ENCODE measurements at regions of chr16 and their contacts with region 1.

Region 1: GRCh38 chr16:66483689-66484481 is 56.8 kb downstream of the BEAN1 start:
- DNase-seq: peak; percentile 42 to 56
- ATAC-seq: peak; percentile 34 to 61
- H3K4me3 ChIP-seq: no peak overlapping the region
- H3K27ac ChIP-seq: no peak overlapping the region
- H3K4me1 ChIP-seq: peaks cover 0 to 2% of the 10 kb centered on the region in 2 donors
- H3K27me3 ChIP-seq: no peaks in the 10 kb centered on the region
- CTCF ChIP-seq: peak; percentile 78 to 95 (median 83)
- POLR2A ChIP-seq: no peak

Region 2: DNA sequence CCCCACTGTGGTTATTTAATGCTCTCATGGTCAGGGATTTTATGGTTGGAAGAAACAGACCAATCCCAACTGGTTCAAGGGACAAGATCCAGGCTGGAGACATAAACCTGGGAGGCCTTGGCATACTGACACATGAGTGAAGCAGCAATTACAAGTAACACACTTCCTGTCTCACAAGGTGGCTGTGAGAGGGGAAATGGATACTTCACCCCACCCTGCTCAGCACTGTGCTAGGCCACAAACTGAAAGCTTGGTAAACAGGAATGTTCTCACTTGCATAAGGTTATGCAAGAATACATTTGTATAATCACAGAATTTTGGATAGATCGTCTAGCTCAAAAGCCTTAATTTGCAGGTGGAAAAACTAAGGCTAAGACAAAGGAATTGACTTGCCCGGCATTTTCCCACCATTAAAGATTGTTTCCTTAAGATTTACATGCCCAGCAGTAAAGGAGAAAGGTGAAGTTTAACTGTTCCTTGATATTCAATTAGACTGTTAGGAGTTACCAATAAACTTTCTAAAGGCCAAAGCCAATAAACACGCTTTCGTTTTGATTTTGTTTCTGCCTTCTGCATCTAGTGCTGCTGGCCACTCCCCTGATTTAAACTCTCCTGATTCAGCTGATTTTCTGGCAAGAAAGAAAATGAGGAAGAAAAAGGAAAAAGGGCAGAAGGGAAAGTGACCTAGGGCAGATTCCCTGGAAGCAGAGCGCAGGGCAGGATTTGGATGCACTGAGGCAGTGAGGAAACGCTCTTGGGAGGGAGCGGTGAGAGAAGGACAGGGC is 333.0 kb before region 1 on chr16:
- in situ Hi-C with region 1: no loop called
- intact Hi-C with region 1: no loop called
- DNase-seq: peak in 1 of 2 donors; percentile 28
- ATAC-seq: peak; percentile 69 to 78
- H3K4me3 ChIP-seq: no peak overlapping the region
- H3K27ac ChIP-seq: peak overlapping the region in 3 of 4 donors; percentile 42 to 49 (median 44)
- H3K4me1 ChIP-seq: peaks cover 0 to 5% of the 10 kb centered on the region in 2 donors
- H3K27me3 ChIP-seq: no peaks in the 10 kb centered on the region
- CTCF ChIP-seq: no peak
- POLR2A ChIP-seq: no peak

Region 3: GRCh38 chr16:66369055-66369592 is 114.8 kb before region 1 on chr16:
- in situ Hi-C with region 1: no loop called
- intact Hi-C with region 1: no loop called
- DNase-seq: no peak
- ATAC-seq: no peak
- H3K4me3 ChIP-seq: peak overlapping the region; percentile 6 to 58 (median 51)
- H3K27ac ChIP-seq: peak overlapping the region; percentile 75 to 84 (median 80)
- H3K4me1 ChIP-seq: peaks cover 0 to 3% of the 10 kb centered on the region in 2 donors
- H3K27me3 ChIP-seq: no peaks in the 10 kb centered on the region
- CTCF ChIP-seq: no peak
- POLR2A ChIP-seq: peak; percentile 25 to 46

Region 4: DNA sequence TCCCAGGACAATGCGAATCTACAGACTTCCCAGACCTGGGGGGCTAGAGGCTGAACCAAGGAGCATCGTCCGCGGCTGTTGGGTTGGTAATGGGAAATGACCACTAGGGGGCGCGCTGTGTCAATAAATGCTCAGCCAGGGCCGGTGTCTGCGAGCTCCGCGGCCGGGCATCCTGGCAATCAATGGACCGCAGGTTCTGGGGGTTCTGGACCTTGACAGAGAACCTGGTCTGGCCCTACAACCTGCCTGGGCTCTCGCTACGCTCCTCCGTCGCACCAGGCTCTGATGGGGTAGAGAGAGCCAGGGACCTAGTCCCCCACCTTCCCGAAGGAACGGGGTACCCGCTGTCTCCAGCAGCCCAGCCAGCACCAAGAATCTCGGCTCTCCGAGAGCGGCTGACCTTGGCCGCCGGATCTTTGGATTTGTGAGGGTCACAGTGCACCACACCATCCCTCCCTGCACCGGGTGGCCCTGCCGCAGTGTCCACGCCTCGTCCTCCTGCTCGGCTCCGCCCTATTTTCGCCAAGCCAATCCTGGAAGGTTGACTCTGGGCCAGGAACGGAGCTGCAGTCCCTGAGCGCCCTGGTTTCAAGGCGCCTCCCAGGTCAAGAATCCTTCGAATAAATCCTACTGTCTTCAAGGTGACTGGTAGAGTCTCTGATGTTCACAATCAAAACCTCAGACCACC is 77.2 kb before region 1 on chr16:
- in situ Hi-C with region 1: loop called in 3 of 4 experiments (anchors 5 to 10 kb)
- intact Hi-C with region 1: loop called (anchors 1 kb)
- DNase-seq: peak; percentile 54 to 67
- ATAC-seq: peak; percentile 86
- H3K4me3 ChIP-seq: peak overlapping the region; percentile 50 to 62 (median 53)
- H3K27ac ChIP-seq: peak overlapping the region in 1 of 4 donors; percentile 7
- H3K4me1 ChIP-seq: peaks cover 3 to 6% of the 10 kb centered on the region in 2 donors
- H3K27me3 ChIP-seq: no peaks in the 10 kb centered on the region
- CTCF ChIP-seq: peak; percentile 80 to 94 (median 89)
- POLR2A ChIP-seq: no peak

Region 5: DNA sequence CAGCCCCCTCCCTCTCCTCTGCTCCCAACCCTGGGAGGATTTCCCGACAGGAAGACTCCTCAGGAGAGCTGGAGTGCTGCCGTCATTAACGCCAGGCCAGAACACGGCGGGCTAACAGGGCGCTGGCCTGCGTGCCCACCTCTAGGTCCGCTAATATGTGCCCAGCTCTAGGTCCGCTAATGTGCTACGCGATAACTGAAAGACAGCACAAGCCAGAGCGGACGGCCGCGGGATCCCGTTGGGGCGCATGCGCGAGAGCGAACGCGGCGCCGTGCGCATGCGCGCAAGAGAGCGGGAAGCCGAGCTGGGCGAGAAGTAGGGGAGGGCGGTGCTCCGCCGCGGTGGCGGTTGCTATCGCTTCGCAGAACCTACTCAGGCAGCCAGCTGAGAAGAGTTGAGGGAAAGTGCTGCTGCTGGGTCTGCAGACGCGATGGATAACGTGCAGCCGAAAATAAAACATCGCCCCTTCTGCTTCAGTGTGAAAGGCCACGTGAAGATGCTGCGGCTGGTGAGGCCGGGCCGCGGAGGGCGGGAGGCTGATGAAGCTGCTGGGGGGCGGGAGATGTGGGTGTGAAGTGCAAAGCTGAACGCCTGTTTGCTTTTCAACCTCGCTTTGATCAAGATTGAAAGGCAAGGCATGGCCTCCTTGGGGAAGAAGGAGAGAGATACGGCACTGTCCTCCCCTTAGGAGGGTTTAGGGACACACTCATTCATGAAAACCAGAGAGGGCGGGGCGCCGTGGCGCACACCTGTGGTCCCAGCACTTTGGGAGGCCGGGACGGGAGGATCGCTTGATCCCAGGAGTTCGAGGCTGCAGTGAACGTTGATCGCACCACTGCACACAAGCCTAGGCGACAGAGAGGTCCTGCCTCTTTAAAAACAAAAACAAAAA is 68.6 kb after region 1 on chr16 and contains the start of gene CKLF:
- in situ Hi-C with region 1: loop called in 2 of 4 experiments (anchors 5 to 10 kb)
- intact Hi-C with region 1: no loop called
- DNase-seq: peak; percentile 73 to 86
- ATAC-seq: peak; percentile 83 to 87
- H3K4me3 ChIP-seq: peak within 1 kb of the TSS; percentile 56 to 78 (median 71)
- H3K27ac ChIP-seq: peak within 1 kb of the TSS; percentile 86 to 96 (median 92)
- H3K4me1 ChIP-seq: peaks cover 32 to 33% of the 10 kb centered on the region in 2 donors
- H3K27me3 ChIP-seq: no peaks in the 10 kb centered on the region
- CTCF ChIP-seq: no peak
- POLR2A ChIP-seq: peak; percentile 52 to 65
- total RNA-seq, gene CKLF: 5.8 to 8.5 (median 6.9) TPM

Region 6: GRCh38 chr16:66608241-66609138 is 124.6 kb after region 1 on chr16:
- in situ Hi-C with region 1: no loop called
- intact Hi-C with region 1: loop called (anchors 5 kb)
- DNase-seq: peak; percentile 73 to 85
- ATAC-seq: peak; percentile 83 to 87
- H3K4me3 ChIP-seq: no peak overlapping the region
- H3K27ac ChIP-seq: peak overlapping the region in 2 of 4 donors; percentile 10 to 23
- H3K4me1 ChIP-seq: peaks cover 11 to 14% of the 10 kb centered on the region in 2 donors
- H3K27me3 ChIP-seq: peaks cover 0 to 20% (median 11%) of the 10 kb centered on the region in 3 donors
- CTCF ChIP-seq: peak; percentile 67 to 94 (median 87)
- POLR2A ChIP-seq: no peak